ENCODE measurements at regions of chr10 and their contacts with region 1.

Region 1: GRCh38 chr10:112687647-112688046 is 240.6 kb downstream of the VTI1A start:
- DNase-seq: no peak

Region 2: GRCh38 chr10:112701211-112701877 is 13.7 kb after region 1 on chr10:
- intact Hi-C with region 1: loop called in 1 of 2 experiments (anchors 1 kb)
- DNase-seq: no peak

Region 3: DNA sequence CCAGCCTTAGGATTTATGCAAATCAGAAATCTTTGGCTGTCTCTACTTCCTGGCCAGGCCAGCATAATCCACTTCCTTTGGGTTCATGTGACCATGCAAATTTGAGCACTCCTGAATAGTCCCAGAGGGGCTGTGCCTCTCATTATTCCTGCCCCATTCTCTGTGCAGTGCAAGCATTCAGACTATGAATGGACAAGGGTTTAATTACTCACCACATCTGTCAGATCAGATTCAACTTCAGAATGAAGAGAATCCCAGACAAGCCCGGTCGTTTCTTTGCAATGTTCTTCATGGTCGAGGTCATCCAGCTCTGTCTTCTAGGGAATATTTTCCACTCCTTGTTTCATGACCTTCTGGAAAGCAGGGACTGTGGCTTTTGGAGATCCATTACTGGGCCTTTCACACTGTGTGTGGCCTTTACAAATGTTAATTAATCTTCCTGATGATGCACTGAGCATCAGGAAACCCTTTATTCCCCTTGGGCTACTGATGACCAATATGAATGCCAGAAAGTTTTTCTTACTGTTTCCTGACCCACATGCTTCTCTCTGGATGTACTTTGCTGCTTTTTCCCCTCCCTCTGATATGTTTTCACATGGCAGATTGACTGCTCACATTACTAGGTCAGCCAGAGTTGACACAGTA is 44.8 kb after region 1 on chr10:
- intact Hi-C with region 1: no loop called
- DNase-seq: no peak

Measured in posterior vena cava (tissue), 2 donors.